T-cell (primary cell): ENCODE measurements at regions of chrX and their contacts with region 1.

Region 1: DNA sequence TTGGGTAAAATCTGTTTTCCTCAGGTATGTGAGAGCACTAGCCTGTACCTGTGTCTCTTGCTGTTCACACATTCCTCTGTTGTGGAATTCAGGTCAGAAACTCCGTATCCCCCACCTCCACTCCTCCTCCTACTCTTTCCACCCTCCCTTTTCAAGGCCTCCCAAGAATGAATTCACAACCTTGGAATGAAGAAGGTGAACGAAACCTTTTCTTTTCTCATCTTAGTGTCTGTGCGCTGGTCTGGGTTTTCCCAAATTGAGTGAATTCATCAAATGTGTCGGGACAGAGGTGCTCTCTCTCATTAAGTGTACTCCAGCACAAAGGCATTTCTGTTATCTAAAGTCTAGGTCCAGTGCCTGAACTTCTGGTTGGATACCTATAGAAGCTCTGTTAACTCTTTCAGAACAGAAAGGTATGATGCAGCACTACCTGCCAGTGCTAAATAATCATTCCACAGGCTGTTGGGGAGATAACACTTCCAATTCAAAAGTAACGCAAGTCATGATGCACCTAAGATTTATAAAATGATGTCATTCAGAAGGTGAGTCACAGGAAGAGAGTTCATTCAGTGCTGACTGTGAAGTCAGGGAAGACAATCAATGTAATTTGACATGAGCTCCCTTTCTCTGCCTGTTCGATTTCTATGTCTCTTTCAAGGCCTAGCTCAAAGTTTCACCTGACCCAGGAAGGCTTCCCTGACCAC is 41.9 kb downstream of the COL4A6 start:
- DNase-seq: no peak
- ATAC-seq: no peak
- H3K4me3 ChIP-seq: no peak overlapping the region
- H3K4me3 Mint-ChIP-seq: no peak overlapping the region
- H3K27ac ChIP-seq: no peak overlapping the region
- H3K27ac Mint-ChIP-seq: no peak overlapping the region
- H3K4me1 ChIP-seq: no peaks in the 10 kb centered on the region
- H3K4me1 Mint-ChIP-seq: no peaks in the 10 kb centered on the region
- H3K27me3 ChIP-seq: peaks cover 0 to 2% of the 10 kb centered on the region in 2 experiments
- H3K27me3 Mint-ChIP-seq: peaks cover 0 to 16% of the 10 kb centered on the region in 2 donors

Region 2: GRCh38 chrX:108366644-108367406 is 29.5 kb before region 1 on chrX:
- CTCF ChIA-PET with region 1: no interaction called
- POLR2A ChIA-PET with region 1: interaction called in 1 of 2 experiments, 13 read pairs
- DNase-seq: no peak
- ATAC-seq: no peak
- H3K4me3 ChIP-seq: no peak overlapping the region
- H3K4me3 Mint-ChIP-seq: no peak overlapping the region
- H3K27ac ChIP-seq: no peak overlapping the region
- H3K27ac Mint-ChIP-seq: no peak overlapping the region
- H3K4me1 ChIP-seq: no peaks in the 10 kb centered on the region
- H3K4me1 Mint-ChIP-seq: no peaks in the 10 kb centered on the region
- H3K27me3 ChIP-seq: no peaks in the 10 kb centered on the region
- H3K27me3 Mint-ChIP-seq: peaks cover 0 to 20% of the 10 kb centered on the region in 2 donors

Region 3: DNA sequence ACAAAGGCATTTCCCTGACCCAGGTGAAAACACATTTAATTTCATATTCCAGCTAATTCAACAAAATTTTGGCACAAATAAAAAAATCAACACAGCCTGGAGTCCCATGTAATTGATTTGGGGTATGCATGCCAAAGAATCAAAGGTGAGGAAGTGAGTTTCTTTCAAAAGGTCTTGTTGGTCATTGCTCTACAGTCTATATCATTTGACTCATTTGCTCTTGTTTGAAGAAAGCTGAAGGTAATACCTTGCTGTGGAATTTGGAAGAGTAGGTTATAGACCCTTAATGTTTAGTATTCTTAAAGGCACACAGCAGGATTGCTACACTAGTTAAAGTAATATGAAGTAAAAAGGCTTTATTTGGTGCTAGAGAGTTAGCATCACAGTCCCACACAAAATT is 16.4 kb after region 1 on chrX:
- CTCF ChIA-PET with region 1: no interaction called
- POLR2A ChIA-PET with region 1: no interaction called
- DNase-seq: no peak
- ATAC-seq: no peak
- H3K4me3 ChIP-seq: no peak overlapping the region
- H3K4me3 Mint-ChIP-seq: no peak overlapping the region
- H3K27ac ChIP-seq: no peak overlapping the region
- H3K27ac Mint-ChIP-seq: no peak overlapping the region
- H3K4me1 ChIP-seq: no peaks in the 10 kb centered on the region
- H3K4me1 Mint-ChIP-seq: no peaks in the 10 kb centered on the region
- H3K27me3 ChIP-seq: no peaks in the 10 kb centered on the region
- H3K27me3 Mint-ChIP-seq: peaks cover 0 to 12% of the 10 kb centered on the region in 2 donors